B cell (primary cell): ENCODE measurements at regions of chr21 and their contacts with region 1.

Region 1: DNA sequence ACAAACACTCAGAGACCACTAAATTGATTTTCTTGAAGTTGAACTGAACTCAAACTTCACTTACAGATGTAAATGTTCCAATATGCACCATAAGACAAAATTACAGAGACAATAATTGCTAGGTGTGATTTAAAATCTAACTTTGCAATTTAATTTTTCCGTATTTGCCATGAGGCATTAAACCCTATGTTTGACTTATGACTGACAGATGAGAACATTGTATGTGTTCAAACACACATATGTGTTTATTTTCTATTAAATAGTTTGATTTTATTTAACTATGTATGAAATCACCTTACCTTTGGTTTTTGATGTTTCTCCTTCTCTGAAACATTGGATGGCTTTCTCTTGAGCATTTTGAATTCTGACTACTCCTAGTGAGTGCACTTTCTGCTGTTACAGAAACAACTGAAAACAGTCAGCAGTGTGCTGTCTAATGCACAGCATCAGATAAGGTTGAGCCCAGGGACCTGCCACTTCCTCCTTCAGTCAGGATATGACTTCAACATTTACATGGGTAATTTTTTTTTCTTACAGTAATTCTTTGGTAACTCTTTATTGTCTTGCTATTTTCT is at the start of gene SAMSN1:
- DNase-seq: peak; percentile 78
- ATAC-seq: peak; percentile 94
- H3K4me3 ChIP-seq: peak within 1 kb of the TSS; percentile 35 to 91 (median 57)
- H3K4me3 Mint-ChIP-seq: peak within 1 kb of the TSS; percentile 96
- H3K27ac ChIP-seq: peak within 1 kb of the TSS; percentile 37 to 59
- H3K27ac Mint-ChIP-seq: peak within 1 kb of the TSS; percentile 94
- H3K4me1 ChIP-seq: peaks cover 27 to 29% of the 10 kb centered on the region in 2 donors
- H3K4me1 Mint-ChIP-seq: peaks cover 45% of the 10 kb centered on the region
- H3K27me3 ChIP-seq: no peaks in the 10 kb centered on the region
- H3K27me3 Mint-ChIP-seq: no peaks in the 10 kb centered on the region
- CTCF ChIP-seq: no peak
- total RNA-seq, gene SAMSN1: 53.1 and 57.6 TPM in 2 replicates

Region 2: GRCh38 chr21:14533504-14534428 is 12.2 kb before region 1 on chr21:
- CTCF ChIA-PET with region 1: interaction called, 8 read pairs
- POLR2A ChIA-PET with region 1: interaction called, 4 read pairs
- intact Hi-C with region 1: loop called (anchors 1 kb)
- DNase-seq: peak; percentile 76
- ATAC-seq: peak; percentile 77
- H3K4me3 ChIP-seq: peak overlapping the region in 4 of 5 experiments; percentile 13 to 54 (median 30)
- H3K4me3 Mint-ChIP-seq: peak overlapping the region; percentile 81
- H3K27ac ChIP-seq: peak overlapping the region; percentile 77 to 92
- H3K27ac Mint-ChIP-seq: peak overlapping the region; percentile 95
- H3K4me1 ChIP-seq: peaks cover 22 to 31% of the 10 kb centered on the region in 2 donors
- H3K4me1 Mint-ChIP-seq: peaks cover 58% of the 10 kb centered on the region
- H3K27me3 ChIP-seq: no peaks in the 10 kb centered on the region
- H3K27me3 Mint-ChIP-seq: no peaks in the 10 kb centered on the region
- CTCF ChIP-seq: no peak

Region 3: GRCh38 chr21:14591882-14592281 is 45.9 kb after region 1 on chr21:
- CTCF ChIA-PET with region 1: no interaction called
- POLR2A ChIA-PET with region 1: no interaction called
- intact Hi-C with region 1: loop called (anchors 5 kb)
- DNase-seq: no peak
- ATAC-seq: no peak
- H3K4me3 ChIP-seq: no peak overlapping the region
- H3K4me3 Mint-ChIP-seq: no peak overlapping the region
- H3K27ac ChIP-seq: no peak overlapping the region
- H3K27ac Mint-ChIP-seq: no peak overlapping the region
- H3K4me1 ChIP-seq: peaks cover 3 to 8% of the 10 kb centered on the region in 2 donors
- H3K4me1 Mint-ChIP-seq: peaks cover 20% of the 10 kb centered on the region
- H3K27me3 ChIP-seq: no peaks in the 10 kb centered on the region
- H3K27me3 Mint-ChIP-seq: no peaks in the 10 kb centered on the region
- CTCF ChIP-seq: no peak

Region 4: GRCh38 chr21:14657241-14658008 is 111.4 kb after region 1 on chr21:
- CTCF ChIA-PET with region 1: no interaction called
- POLR2A ChIA-PET with region 1: no interaction called
- intact Hi-C with region 1: no loop called
- DNase-seq: no peak
- ATAC-seq: no peak
- H3K4me3 ChIP-seq: no peak overlapping the region
- H3K4me3 Mint-ChIP-seq: no peak overlapping the region
- H3K27ac ChIP-seq: no peak overlapping the region
- H3K27ac Mint-ChIP-seq: no peak overlapping the region
- H3K4me1 ChIP-seq: no peaks in the 10 kb centered on the region
- H3K4me1 Mint-ChIP-seq: no peaks in the 10 kb centered on the region
- H3K27me3 ChIP-seq: no peaks in the 10 kb centered on the region
- H3K27me3 Mint-ChIP-seq: no peaks in the 10 kb centered on the region
- CTCF ChIP-seq: no peak

Region 5: GRCh38 chr21:14686466-14687267 is 140.7 kb after region 1 on chr21:
- CTCF ChIA-PET with region 1: no interaction called
- POLR2A ChIA-PET with region 1: no interaction called
- intact Hi-C with region 1: loop called (anchors 5 kb)
- DNase-seq: peak; percentile 52
- ATAC-seq: peak; percentile 32
- H3K4me3 ChIP-seq: peak overlapping the region in 3 of 5 experiments; percentile 5 to 18 (median 6)
- H3K4me3 Mint-ChIP-seq: peak overlapping the region; percentile 78
- H3K27ac ChIP-seq: peak overlapping the region; percentile 64 to 80
- H3K27ac Mint-ChIP-seq: peak overlapping the region; percentile 88
- H3K4me1 ChIP-seq: peaks cover 57% of the 10 kb centered on the region in 2 donors
- H3K4me1 Mint-ChIP-seq: peaks cover 56% of the 10 kb centered on the region
- H3K27me3 ChIP-seq: no peaks in the 10 kb centered on the region
- H3K27me3 Mint-ChIP-seq: no peaks in the 10 kb centered on the region
- CTCF ChIP-seq: no peak